ENCODE measurements at regions of chrX and their contacts with region 1.

Region 1: DNA sequence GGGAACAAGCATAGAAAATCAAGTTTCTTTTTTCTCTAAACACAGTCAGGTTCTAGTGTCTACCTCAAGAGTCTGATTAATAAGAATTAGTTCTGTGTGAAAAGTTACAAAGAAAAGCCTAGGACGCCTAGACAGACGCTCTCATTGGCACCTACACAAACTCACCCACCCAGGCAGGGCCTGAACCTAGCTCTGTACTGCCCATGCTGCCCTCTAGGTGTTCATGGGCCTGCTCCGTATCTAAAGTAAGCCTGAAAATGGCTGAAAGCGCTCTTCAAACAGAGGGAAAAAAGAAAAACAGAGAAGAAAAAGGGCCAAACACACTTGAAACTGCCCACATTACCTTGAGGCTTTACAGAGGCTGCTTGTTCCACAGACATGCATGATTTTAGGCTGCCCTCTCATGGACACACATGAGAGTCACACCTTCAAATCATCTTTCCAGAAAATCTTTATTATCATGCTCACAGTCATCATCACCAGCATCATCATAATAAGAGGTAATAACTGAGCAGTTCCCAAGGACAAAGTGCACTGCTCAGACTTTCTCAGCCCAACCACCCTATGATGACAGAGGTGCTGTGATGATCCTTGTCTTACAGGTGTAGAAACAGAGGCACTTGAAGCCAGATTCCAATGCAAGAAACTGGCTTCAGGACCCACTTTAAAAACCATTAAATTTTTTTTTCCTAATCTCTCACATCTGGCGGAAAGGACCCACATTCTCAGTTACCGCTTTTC is 49.6 kb downstream of the MAP7D2 start:
- DNase-seq: no peak
- ATAC-seq: peak; percentile 79
- H3K4me3 ChIP-seq: no peak overlapping the region
- H3K27ac ChIP-seq: no peak overlapping the region
- H3K4me1 ChIP-seq: no peaks in the 10 kb centered on the region
- H3K27me3 ChIP-seq: peaks cover 0 to 2% of the 10 kb centered on the region in 2 experiments; a peak in 1 of 4 replicates
- CTCF ChIP-seq: peak; percentile 56 to 83 (median 67); a peak in 5 of 6 replicates
- EP300 ChIP-seq: no peak
- POLR2A ChIP-seq: no peak
- RAD21 ChIP-seq: peak; percentile 81

Region 2: GRCh38 chrX:19372170-19372546 is 695.0 kb before region 1 on chrX:
- CTCF ChIA-PET with region 1: interaction called, 6 read pairs
- POLR2A ChIA-PET with region 1: no interaction called
- RAD21 ChIA-PET with region 1: interaction called, 3 read pairs
- SMC1A ChIA-PET with region 1: interaction called, 7 read pairs
- in situ Hi-C with region 1: loop called (anchors 5 kb)
- intact Hi-C with region 1: loop called (anchors 2 kb)
- DNase-seq: no peak
- ATAC-seq: peak; percentile 94
- H3K4me3 ChIP-seq: peak overlapping the region; percentile 28; the same call in 1 of the 2 replicates
- H3K27ac ChIP-seq: no peak overlapping the region
- H3K4me1 ChIP-seq: no peaks in the 10 kb centered on the region; the same call in 1 of the 2 replicates
- H3K27me3 ChIP-seq: no peaks in the 10 kb centered on the region
- CTCF ChIP-seq: peak; percentile 67 to 81 (median 69)
- EP300 ChIP-seq: no peak
- POLR2A ChIP-seq: no peak
- RAD21 ChIP-seq: peak; percentile 78

Region 3: GRCh38 chrX:19593690-19594089 is 473.4 kb before region 1 on chrX:
- CTCF ChIA-PET with region 1: no interaction called
- POLR2A ChIA-PET with region 1: no interaction called
- RAD21 ChIA-PET with region 1: interaction called, 3 read pairs
- SMC1A ChIA-PET with region 1: no interaction called
- in situ Hi-C with region 1: no loop called
- intact Hi-C with region 1: loop called (anchors 1 kb)
- DNase-seq: no peak
- ATAC-seq: peak; percentile 71
- H3K4me3 ChIP-seq: no peak overlapping the region
- H3K27ac ChIP-seq: no peak overlapping the region
- H3K4me1 ChIP-seq: no peaks in the 10 kb centered on the region
- H3K27me3 ChIP-seq: no peaks in the 10 kb centered on the region
- CTCF ChIP-seq: peak in 2 of 3 experiments; percentile 16 to 40; a peak in 4 of 6 replicates
- EP300 ChIP-seq: no peak
- POLR2A ChIP-seq: no peak
- RAD21 ChIP-seq: peak; percentile 62

Region 4: DNA sequence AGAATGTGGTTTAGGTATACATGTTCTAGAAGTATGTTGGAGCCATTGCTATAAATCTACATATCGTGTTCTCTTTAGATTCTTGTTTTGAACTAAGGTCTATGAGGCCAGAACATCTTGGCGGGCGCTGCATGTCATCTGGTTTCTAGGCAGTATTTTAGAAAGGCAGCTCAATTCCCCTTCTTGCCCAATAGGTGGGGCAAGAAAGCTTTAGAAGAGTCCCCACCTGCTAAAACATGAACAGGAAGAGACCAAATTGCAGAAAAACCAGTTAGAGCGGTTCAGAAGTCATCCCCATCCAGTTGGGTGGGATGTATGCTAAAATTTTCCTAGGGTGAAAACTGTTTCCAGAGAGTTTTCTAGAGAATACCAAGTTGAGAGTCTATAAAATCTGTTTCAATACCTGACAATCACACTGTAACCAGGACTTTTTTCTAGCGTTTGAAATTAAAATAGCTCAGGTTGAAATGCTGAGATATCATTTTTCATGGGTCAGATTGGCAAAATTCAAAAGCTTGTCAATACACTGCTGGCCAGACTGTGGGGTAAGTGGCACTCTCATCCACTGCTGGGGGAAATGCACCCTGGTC is 162.3 kb before region 1 on chrX:
- CTCF ChIA-PET with region 1: interaction called, 183 read pairs
- POLR2A ChIA-PET with region 1: interaction called, 7 read pairs
- RAD21 ChIA-PET with region 1: interaction called, 60 read pairs
- SMC1A ChIA-PET with region 1: interaction called, 90 read pairs
- in situ Hi-C with region 1: loop called (anchors 25 kb)
- intact Hi-C with region 1: loop called (anchors 1 kb)
- DNase-seq: no peak
- ATAC-seq: peak; percentile 93
- H3K4me3 ChIP-seq: no peak overlapping the region
- H3K27ac ChIP-seq: no peak overlapping the region
- H3K4me1 ChIP-seq: no peaks in the 10 kb centered on the region; the same call in 1 of the 2 replicates
- H3K27me3 ChIP-seq: no peaks in the 10 kb centered on the region
- CTCF ChIP-seq: peak; percentile 79 to 84 (median 80)
- EP300 ChIP-seq: no peak
- POLR2A ChIP-seq: no peak
- RAD21 ChIP-seq: peak; percentile 88

Region 5: GRCh38 chrX:20080277-20080676 is 13.1 kb after region 1 on chrX:
- CTCF ChIA-PET with region 1: interaction called, 23 read pairs
- POLR2A ChIA-PET with region 1: no interaction called
- RAD21 ChIA-PET with region 1: interaction called, 6 read pairs
- SMC1A ChIA-PET with region 1: interaction called, 8 read pairs
- in situ Hi-C with region 1: no loop called
- intact Hi-C with region 1: no loop called
- DNase-seq: no peak
- ATAC-seq: no peak
- H3K4me3 ChIP-seq: no peak overlapping the region
- H3K27ac ChIP-seq: no peak overlapping the region
- H3K4me1 ChIP-seq: no peaks in the 10 kb centered on the region
- H3K27me3 ChIP-seq: no peaks in the 10 kb centered on the region
- CTCF ChIP-seq: no peak
- EP300 ChIP-seq: no peak
- POLR2A ChIP-seq: no peak
- RAD21 ChIP-seq: no peak

Region 6: DNA sequence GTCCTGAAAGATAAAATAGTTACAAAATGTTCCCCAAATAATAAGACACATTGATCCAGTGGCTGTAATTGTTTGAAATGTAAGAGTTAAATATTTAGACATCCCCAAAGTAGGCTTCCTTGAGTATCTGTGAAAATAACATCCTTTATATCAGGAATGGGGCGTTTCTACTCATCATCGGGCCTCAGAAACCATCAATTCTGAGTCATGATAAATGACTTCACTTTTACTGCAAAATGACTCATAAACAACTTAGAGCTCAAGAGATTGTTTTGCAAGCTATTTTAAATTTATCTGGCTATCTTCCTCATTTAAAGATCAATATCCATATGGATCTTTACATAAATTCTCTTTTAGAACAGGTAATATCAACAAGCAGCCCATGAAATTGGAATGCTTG is 937.7 kb after region 1 on chrX:
- CTCF ChIA-PET with region 1: no interaction called
- POLR2A ChIA-PET with region 1: no interaction called
- RAD21 ChIA-PET with region 1: no interaction called
- SMC1A ChIA-PET with region 1: no interaction called
- in situ Hi-C with region 1: no loop called
- intact Hi-C with region 1: no loop called
- DNase-seq: no peak
- ATAC-seq: no peak
- H3K4me3 ChIP-seq: no peak overlapping the region
- H3K27ac ChIP-seq: no peak overlapping the region
- H3K4me1 ChIP-seq: no peaks in the 10 kb centered on the region
- H3K27me3 ChIP-seq: no peaks in the 10 kb centered on the region
- CTCF ChIP-seq: no peak
- EP300 ChIP-seq: no peak
- POLR2A ChIP-seq: no peak
- RAD21 ChIP-seq: no peak